Activated CD4-positive, alpha-beta memory T cell treated with anti-CD3 and anti-CD28 coated beads for 36 hours (primary cell): ENCODE measurements at regions of chr9 and their contacts with region 1.

Region 1: GRCh38 chr9:4740638-4741364 is at the start of gene AK3:
- DNase-seq: peak; percentile 90
- H3K4me3 Mint-ChIP-seq: peak within 1 kb of the TSS; percentile 83
- H3K27ac Mint-ChIP-seq: peak within 1 kb of the TSS; percentile 78
- H3K4me1 Mint-ChIP-seq: peaks cover 34% of the 10 kb centered on the region
- H3K27me3 Mint-ChIP-seq: no peaks in the 10 kb centered on the region
- total RNA-seq, gene AK3: 33.8 to 34.5 TPM

Region 2: GRCh38 chr9:4297151-4297785 is 443.5 kb before region 1 on chr9:
- CTCF ChIA-PET with region 1: no interaction called
- POLR2A ChIA-PET with region 1: no interaction called
- intact Hi-C with region 1: loop called (anchors 10 kb)
- DNase-seq: peak; percentile 66
- H3K4me3 Mint-ChIP-seq: peak overlapping the region; percentile 89
- H3K27ac Mint-ChIP-seq: peak overlapping the region; percentile 59
- H3K4me1 Mint-ChIP-seq: peaks cover 27% of the 10 kb centered on the region
- H3K27me3 Mint-ChIP-seq: peaks cover 37% of the 10 kb centered on the region

Region 3: GRCh38 chr9:4604678-4605095 is 136.1 kb before region 1 on chr9:
- CTCF ChIA-PET with region 1: interaction called, 8 read pairs
- POLR2A ChIA-PET with region 1: interaction called, 4 read pairs
- intact Hi-C with region 1: loop called (anchors 1 kb)
- DNase-seq: peak; percentile 64
- H3K4me3 Mint-ChIP-seq: no peak overlapping the region
- H3K27ac Mint-ChIP-seq: no peak overlapping the region
- H3K4me1 Mint-ChIP-seq: peaks cover 24% of the 10 kb centered on the region
- H3K27me3 Mint-ChIP-seq: no peaks in the 10 kb centered on the region

Region 4: DNA sequence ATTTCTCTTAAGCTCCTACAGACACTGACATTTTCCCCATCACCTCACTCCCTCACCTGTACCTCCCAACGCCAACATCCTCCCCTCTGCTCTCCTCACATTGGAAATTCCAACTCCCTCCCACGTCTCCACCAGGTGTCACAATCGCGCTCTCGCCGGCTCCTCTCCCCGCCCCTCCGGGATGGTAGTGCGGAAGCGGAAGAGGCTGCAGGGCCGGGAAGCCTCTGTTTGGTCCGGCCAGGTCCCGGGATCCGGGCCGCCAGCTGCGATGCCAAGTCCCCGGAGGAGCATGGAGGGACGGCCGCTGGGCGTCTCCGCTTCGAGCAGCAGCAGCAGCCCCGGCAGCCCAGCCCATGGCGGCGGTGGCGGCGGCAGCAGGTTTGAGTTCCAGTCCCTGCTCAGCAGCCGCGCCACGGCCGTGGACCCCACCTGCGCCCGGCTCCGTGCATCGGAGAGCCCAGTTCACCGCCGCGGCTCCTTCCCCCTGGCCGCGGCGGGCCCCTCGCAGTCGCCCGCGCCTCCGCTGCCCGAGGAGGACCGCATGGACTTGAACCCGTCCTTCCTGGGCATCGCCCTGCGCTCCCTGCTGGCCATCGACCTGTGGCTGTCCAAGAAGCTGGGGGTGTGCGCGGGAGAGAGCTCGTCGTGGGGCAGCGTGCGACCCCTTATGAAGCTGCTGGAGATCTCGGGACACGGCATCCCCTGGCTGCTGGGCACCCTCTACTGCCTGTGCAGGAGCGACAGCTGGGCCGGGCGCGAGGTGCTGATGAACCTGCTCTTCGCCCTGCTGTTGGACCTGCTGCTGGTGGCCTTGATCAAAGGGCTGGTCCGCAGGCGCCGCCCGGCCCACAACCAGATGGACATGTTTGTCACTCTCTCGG is 78.5 kb before region 1 on chr9 and contains the start of gene PLPP6:
- CTCF ChIA-PET with region 1: interaction called, 4 read pairs
- POLR2A ChIA-PET with region 1: no interaction called
- intact Hi-C with region 1: loop called (anchors 2 kb)
- DNase-seq: peak; percentile 88
- H3K4me3 Mint-ChIP-seq: peak within 1 kb of the TSS; percentile 91
- H3K27ac Mint-ChIP-seq: peak within 1 kb of the TSS; percentile 80
- H3K4me1 Mint-ChIP-seq: peaks cover 55% of the 10 kb centered on the region
- H3K27me3 Mint-ChIP-seq: no peaks in the 10 kb centered on the region
- total RNA-seq, gene PLPP6: 4.4 to 4.6 TPM

Region 5: GRCh38 chr9:4792572-4793458 is 52.0 kb after region 1 on chr9 and contains the start of gene RCL1:
- CTCF ChIA-PET with region 1: no interaction called
- POLR2A ChIA-PET with region 1: no interaction called
- intact Hi-C with region 1: loop called (anchors 2 kb)
- DNase-seq: peak; percentile 98
- H3K4me3 Mint-ChIP-seq: peak within 1 kb of the TSS; percentile 93
- H3K27ac Mint-ChIP-seq: peak within 1 kb of the TSS; percentile 86
- H3K4me1 Mint-ChIP-seq: peaks cover 49% of the 10 kb centered on the region
- H3K27me3 Mint-ChIP-seq: no peaks in the 10 kb centered on the region
- total RNA-seq, gene RCL1: 26.0 to 28.2 TPM